ENCODE measurements at regions of chr2 and their contacts with region 1.

Region 1: GRCh38 chr2:71143782-71144181 is 13.3 kb downstream of the MPHOSPH10 start:
- DNase-seq: no peak
- H3K4me3 ChIP-seq: no peak overlapping the region
- H3K4me3 Mint-ChIP-seq: no peak overlapping the region
- H3K27ac ChIP-seq: no peak overlapping the region
- H3K27ac Mint-ChIP-seq: no peak overlapping the region
- H3K4me1 ChIP-seq: no peaks in the 10 kb centered on the region
- H3K4me1 Mint-ChIP-seq: peaks cover 0 to 5% (median 4%) of the 10 kb centered on the region in 4 donors
- H3K27me3 ChIP-seq: no peaks in the 10 kb centered on the region
- H3K27me3 Mint-ChIP-seq: no peaks in the 10 kb centered on the region

Region 2: DNA sequence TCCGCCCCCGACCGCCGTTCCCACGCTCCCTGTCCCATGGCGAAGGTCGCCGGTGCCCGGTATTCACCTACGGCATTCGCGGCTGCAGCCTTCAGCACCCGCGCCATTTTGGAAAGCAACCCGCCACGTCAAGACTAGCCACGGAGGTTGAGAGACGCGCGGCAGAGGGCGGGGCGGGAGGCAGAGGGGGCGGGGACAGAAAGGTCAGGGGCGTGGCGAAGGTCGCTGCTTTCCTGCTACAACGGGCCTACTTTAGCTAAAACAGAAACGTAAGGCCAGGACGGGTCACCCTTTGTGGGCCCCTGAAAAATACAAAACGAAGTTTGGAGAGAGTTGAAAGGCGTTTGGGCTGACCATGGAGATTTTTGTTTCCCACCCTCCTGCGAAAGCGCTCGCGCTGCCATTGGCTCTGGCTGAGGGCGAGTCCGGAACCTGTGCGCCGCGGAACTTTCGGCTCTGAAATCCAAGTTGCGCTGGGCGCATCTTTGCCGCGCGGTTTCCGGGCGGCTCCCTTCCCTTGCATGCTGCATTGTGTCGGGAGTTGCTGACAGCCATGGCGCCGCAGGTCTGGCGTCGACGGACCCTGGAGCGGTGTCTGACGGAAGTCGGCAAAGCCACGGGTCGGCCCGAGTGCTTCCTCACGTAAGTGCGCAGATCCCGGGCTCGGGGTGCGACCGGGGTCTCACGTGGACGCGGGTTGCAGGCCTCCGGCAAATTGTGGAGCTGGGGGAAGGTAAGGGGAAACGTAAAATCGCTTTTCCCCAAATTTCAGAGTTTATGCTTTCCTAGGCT is 13.5 kb before region 1 on chr2 and contains the starts of genes MCEE and MPHOSPH10:
- CTCF ChIA-PET with region 1: no interaction called
- POLR2A ChIA-PET with region 1: interaction called, 11 read pairs
- intact Hi-C with region 1: no loop called
- DNase-seq: peak; percentile 88 to 92 (median 90)
- H3K4me3 ChIP-seq: peak within 1 kb of the TSS; percentile 88 to 91
- H3K4me3 Mint-ChIP-seq: no peak within 1 kb of the TSS
- H3K27ac ChIP-seq: peak within 1 kb of the TSS; percentile 77
- H3K27ac Mint-ChIP-seq: no peak within 1 kb of the TSS
- H3K4me1 ChIP-seq: peaks cover 38% of the 10 kb centered on the region
- H3K4me1 Mint-ChIP-seq: peaks cover 11 to 22% (median 15%) of the 10 kb centered on the region in 4 donors
- H3K27me3 ChIP-seq: no peaks in the 10 kb centered on the region
- H3K27me3 Mint-ChIP-seq: no peaks in the 10 kb centered on the region
- total RNA-seq, gene MCEE: 27.1 to 30.0 TPM
- total RNA-seq, gene MPHOSPH10: 50.6 to 54.2 TPM

Measured in CD4-positive, alpha-beta memory T cell (primary cell).